ENCODE measurements at regions of chr7 and their contacts with region 1.

Region 1: DNA sequence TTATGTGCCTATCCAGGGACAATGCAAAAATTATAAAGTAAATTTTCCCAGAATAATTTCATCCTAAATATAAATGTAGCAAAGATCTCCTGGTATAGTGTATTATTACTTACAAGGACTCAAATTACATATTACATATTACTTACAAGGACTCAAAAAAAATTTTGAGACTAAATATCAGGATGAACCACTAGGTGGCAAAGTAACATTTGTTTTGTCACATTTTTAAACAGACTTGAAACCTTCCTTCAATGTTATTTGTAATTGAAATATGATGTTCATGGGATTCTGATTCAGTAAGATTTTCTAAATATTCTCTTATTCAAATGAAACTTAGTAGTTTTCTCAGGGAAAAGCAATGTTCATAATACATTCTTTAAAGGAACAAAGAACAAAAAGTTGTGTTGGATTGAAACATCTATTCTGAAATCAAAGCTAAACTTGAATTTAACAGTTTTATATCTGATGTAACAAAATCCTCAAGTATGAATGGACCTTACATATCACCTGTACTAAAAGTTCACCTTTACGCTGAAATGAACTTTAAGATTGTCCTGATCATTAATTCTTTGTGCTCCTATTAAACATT is 74.3 kb upstream of the GNAI1 start:
- DNase-seq: peak in 5 of 9 donors; percentile 13 to 40 (median 22)
- ATAC-seq: no peak
- H3K4me3 ChIP-seq: no peak overlapping the region
- H3K4me3 Mint-ChIP-seq: no peak overlapping the region
- H3K27ac ChIP-seq: no peak overlapping the region
- H3K27ac Mint-ChIP-seq: no peak overlapping the region
- H3K4me1 ChIP-seq: no peaks in the 10 kb centered on the region
- H3K4me1 Mint-ChIP-seq: no peaks in the 10 kb centered on the region
- H3K27me3 ChIP-seq: no peaks in the 10 kb centered on the region
- H3K27me3 Mint-ChIP-seq: no peaks in the 10 kb centered on the region

Region 2: GRCh38 chr7:80114159-80114558 is 53.8 kb after region 1 on chr7:
- CTCF ChIA-PET with region 1: no interaction called
- POLR2A ChIA-PET with region 1: no interaction called
- intact Hi-C with region 1: no loop called
- DNase-seq: no peak
- ATAC-seq: no peak
- H3K4me3 ChIP-seq: no peak overlapping the region
- H3K4me3 Mint-ChIP-seq: peak overlapping the region in 1 of 10 donors; percentile 27
- H3K27ac ChIP-seq: no peak overlapping the region
- H3K27ac Mint-ChIP-seq: no peak overlapping the region
- H3K4me1 ChIP-seq: no peaks in the 10 kb centered on the region
- H3K4me1 Mint-ChIP-seq: no peaks in the 10 kb centered on the region
- H3K27me3 ChIP-seq: no peaks in the 10 kb centered on the region
- H3K27me3 Mint-ChIP-seq: peaks cover 0 to 24% (median 0%) of the 10 kb centered on the region in 5 donors

Region 3: GRCh38 chr7:80288175-80289122 is 228.1 kb after region 1 on chr7:
- CTCF ChIA-PET with region 1: no interaction called
- POLR2A ChIA-PET with region 1: no interaction called
- intact Hi-C with region 1: loop called in 1 of 2 experiments (anchors 1 kb)
- DNase-seq: no peak
- ATAC-seq: no peak
- H3K4me3 ChIP-seq: no peak overlapping the region
- H3K4me3 Mint-ChIP-seq: no peak overlapping the region
- H3K27ac ChIP-seq: no peak overlapping the region
- H3K27ac Mint-ChIP-seq: no peak overlapping the region
- H3K4me1 ChIP-seq: no peaks in the 10 kb centered on the region
- H3K4me1 Mint-ChIP-seq: no peaks in the 10 kb centered on the region
- H3K27me3 ChIP-seq: no peaks in the 10 kb centered on the region
- H3K27me3 Mint-ChIP-seq: no peaks in the 10 kb centered on the region

Region 4: GRCh38 chr7:80453699-80454340 is 393.5 kb after region 1 on chr7:
- CTCF ChIA-PET with region 1: no interaction called
- POLR2A ChIA-PET with region 1: no interaction called
- intact Hi-C with region 1: loop called (anchors 1 kb)
- DNase-seq: peak in 1 of 9 donors; percentile 4
- ATAC-seq: no peak
- H3K4me3 ChIP-seq: no peak overlapping the region
- H3K4me3 Mint-ChIP-seq: no peak overlapping the region
- H3K27ac ChIP-seq: no peak overlapping the region
- H3K27ac Mint-ChIP-seq: no peak overlapping the region
- H3K4me1 ChIP-seq: no peaks in the 10 kb centered on the region
- H3K4me1 Mint-ChIP-seq: no peaks in the 10 kb centered on the region
- H3K27me3 ChIP-seq: no peaks in the 10 kb centered on the region
- H3K27me3 Mint-ChIP-seq: no peaks in the 10 kb centered on the region

Region 5: DNA sequence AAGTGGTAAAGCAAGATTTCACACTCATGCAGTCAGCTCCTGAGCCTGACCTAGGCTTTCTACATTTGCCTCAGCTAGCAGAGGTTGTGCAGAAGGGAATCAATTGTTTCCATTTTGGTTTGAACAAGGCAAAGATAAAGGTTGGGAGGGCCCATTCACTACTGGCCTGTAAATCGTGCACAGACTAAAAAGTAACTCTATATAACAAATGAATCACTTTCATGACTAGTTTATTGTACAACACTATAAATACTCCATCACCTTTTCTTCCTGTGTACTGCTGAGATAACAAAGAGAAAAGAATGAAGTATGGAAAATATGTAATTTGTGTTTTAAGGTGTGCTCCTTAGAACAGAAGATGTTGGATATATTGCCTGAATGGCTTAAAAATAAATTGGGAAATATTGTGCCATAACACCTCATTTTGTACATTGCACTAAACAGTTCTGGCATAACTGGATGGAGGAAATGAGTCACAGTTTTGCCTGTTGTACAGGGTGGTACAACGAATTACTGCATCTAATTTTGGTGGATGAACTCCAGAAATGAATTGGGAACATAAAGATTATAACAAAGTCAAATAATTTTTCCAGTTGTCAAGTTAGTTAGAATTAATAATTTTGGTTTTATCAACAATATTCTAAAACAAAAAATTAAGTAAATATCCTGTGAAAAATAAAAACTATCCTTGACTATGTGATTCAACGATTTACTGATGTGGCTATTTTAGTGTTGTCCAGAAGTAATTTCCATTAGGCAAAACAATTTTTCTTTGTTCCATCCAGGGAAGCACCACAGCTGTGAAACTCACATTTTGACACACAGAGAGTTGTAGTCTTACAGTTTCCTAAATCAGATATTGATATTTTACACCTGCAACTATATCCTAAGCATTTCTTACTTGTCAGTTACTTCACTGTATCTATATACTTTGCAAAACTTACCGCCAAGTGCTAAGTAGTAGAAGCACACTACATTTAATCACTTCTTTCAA is 840.6 kb after region 1 on chr7:
- CTCF ChIA-PET with region 1: no interaction called
- POLR2A ChIA-PET with region 1: no interaction called
- intact Hi-C with region 1: no loop called
- DNase-seq: no peak
- ATAC-seq: no peak
- H3K4me3 ChIP-seq: no peak overlapping the region
- H3K4me3 Mint-ChIP-seq: no peak overlapping the region
- H3K27ac ChIP-seq: no peak overlapping the region
- H3K27ac Mint-ChIP-seq: no peak overlapping the region
- H3K4me1 ChIP-seq: no peaks in the 10 kb centered on the region
- H3K4me1 Mint-ChIP-seq: peaks cover 0 to 2% (median 0%) of the 10 kb centered on the region in 7 donors
- H3K27me3 ChIP-seq: no peaks in the 10 kb centered on the region
- H3K27me3 Mint-ChIP-seq: no peaks in the 10 kb centered on the region